Activated CD4-positive, alpha-beta T cell treated with anti-CD3 and anti-CD28 coated beads, Interleukin-2, amount 10 ng/mL, durations not matched to agents 24 days and 14 days (primary cell): ENCODE measurements at regions of chr11 and their contacts with region 1.

Region 1: DNA sequence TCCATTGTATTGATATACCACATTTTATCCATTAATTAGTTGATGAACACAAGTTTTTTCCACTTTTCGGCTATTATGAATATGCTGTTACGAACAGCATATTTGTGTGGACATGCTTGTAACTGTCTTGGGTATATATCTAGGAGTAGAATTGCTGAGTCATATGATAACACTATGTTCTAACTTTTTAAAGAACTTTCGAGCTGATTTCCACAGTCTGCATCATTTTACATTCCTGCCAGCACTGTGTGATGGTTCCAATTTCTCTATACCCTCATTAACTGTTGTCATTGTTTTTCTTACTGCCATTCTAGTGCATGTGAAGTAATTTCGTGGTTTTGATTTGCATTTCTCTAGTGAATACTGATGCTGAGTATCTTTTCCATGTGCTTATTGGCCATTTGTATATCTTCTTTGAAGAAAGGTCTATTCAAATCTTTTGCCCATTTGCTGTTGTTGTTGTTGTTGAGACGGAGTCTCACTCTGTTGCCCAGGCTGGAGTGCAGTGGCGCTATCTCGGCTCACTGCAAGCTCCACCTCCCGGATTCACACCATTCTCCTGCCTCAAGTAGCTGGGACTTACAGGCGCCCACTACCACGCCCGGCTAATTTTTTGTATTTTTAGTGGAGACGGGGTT is 7.4 kb upstream of the RCE1 start:
- DNase-seq: no peak
- H3K4me3 Mint-ChIP-seq: no peak overlapping the region
- H3K27ac Mint-ChIP-seq: no peak overlapping the region
- H3K4me1 Mint-ChIP-seq: peaks cover 19% of the 10 kb centered on the region
- H3K27me3 Mint-ChIP-seq: no peaks in the 10 kb centered on the region

Region 2: DNA sequence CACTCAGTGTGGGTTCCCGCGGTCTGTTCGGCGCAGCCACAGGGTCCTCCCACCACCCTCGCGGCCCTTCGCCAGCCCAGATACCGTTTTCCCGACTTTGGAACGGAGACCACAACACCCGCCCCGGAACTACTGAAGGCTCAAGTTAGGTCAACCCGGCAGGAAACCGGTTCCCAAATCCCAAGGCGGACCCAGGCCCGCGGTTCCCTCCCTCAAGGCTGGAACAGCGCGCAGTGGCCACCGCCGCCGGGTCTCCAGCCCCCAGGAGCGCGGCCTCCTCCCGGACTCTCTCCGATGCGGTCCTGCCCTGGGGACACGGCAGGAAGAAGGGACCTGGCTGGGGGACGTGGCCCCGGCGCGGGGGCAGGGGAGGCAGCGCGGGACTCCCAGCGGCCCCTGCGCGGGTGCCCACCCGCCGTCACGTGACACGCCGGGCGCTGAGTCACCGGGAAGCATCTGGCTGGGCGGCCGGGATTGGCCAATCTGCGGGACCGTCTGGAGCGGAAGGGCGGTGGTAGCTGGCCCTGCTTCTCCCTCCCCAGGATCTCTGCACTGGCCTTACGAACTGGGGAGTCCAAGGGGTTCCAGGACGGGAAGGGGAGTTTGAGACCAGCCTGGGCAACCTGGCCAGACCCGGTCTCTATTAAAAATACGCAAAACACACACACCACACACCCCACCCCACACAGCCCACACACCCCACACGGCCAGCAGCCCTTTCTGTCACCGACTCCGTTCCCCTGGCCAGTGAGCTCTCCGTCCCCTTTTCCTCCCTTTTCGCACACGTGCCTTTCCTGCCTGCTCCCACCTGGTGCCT is 1358.5 kb before region 1 on chr11:
- intact Hi-C with region 1: no loop called
- DNase-seq: peak; percentile 97
- H3K4me3 Mint-ChIP-seq: peak overlapping the region; percentile 97
- H3K27ac Mint-ChIP-seq: peak overlapping the region; percentile 100
- H3K4me1 Mint-ChIP-seq: peaks cover 22% of the 10 kb centered on the region
- H3K27me3 Mint-ChIP-seq: no peaks in the 10 kb centered on the region

Region 3: DNA sequence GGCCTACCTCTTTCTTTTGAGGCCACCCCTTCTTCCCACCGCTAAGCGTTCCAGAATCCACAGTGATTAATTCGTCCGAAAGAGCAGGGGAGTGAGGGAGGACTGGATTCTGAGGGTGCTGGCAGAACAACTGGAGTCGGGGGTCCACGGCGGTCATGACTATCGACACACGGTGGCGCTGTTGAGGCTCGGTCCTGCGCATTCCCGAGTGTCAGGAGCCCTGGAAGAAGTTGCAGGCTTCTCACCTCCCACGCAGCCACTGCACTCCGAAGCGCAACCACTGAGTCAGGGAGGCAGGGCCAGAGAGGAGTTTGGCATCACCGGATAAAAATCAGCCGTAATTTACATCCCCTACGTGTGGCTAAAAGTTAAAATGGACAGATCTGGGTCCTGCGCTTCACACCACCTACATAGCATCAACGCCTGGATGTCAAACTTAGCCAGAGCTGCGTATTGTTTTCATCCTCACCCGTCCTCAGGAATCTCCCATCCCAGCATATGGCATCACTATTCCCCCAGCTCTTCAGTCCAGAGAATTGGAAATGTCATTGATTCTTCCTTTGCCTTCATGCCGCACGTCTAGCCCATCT is 256.8 kb before region 1 on chr11:
- intact Hi-C with region 1: loop called (anchors 10 kb)
- DNase-seq: peak; percentile 92
- H3K4me3 Mint-ChIP-seq: no peak overlapping the region
- H3K27ac Mint-ChIP-seq: no peak overlapping the region
- H3K4me1 Mint-ChIP-seq: peaks cover 11% of the 10 kb centered on the region
- H3K27me3 Mint-ChIP-seq: peaks cover 19% of the 10 kb centered on the region

Region 4: GRCh38 chr11:66950113-66950535 is 114.2 kb after region 1 on chr11:
- intact Hi-C with region 1: no loop called
- DNase-seq: no peak
- H3K4me3 Mint-ChIP-seq: no peak overlapping the region
- H3K27ac Mint-ChIP-seq: peak overlapping the region; percentile 3
- H3K4me1 Mint-ChIP-seq: peaks cover 4% of the 10 kb centered on the region
- H3K27me3 Mint-ChIP-seq: no peaks in the 10 kb centered on the region